ENCODE measurements at regions of chr19 and their contacts with region 1.

Region 1: GRCh38 chr19:35066691-35067563 is 25.4 kb downstream of the HPN start:
- DNase-seq: peak; percentile 99
- ATAC-seq: peak; percentile 80
- H3K4me3 Mint-ChIP-seq: peak overlapping the region; percentile 29
- H3K27ac Mint-ChIP-seq: peak overlapping the region; percentile 100
- H3K4me1 Mint-ChIP-seq: peaks cover 26% of the 10 kb centered on the region
- H3K27me3 Mint-ChIP-seq: peaks cover 32% of the 10 kb centered on the region
- CTCF ChIP-seq: peak; percentile 92

Region 2: DNA sequence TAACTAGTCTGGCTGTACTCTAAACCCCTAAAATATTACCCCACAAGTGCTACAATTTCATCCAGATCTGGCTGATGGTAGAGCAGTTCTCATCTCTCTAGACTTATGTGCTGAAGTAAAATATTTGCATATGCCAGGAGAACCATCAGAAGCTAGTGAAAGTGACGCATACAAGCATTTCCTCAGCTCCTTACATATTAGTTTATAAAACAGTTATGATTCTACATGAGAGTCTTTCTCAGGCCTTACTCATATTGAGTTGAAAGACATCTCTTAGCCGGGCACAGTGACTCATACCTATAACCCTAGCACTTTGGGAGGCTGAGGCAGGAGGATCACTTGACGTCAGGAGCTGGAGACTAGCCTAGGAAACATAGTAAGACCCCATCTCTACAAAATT is 156.2 kb before region 1 on chr19:
- CTCF ChIA-PET with region 1: no interaction called
- POLR2A ChIA-PET with region 1: no interaction called
- DNase-seq: no peak
- ATAC-seq: no peak
- H3K4me3 Mint-ChIP-seq: no peak overlapping the region
- H3K27ac Mint-ChIP-seq: no peak overlapping the region
- H3K4me1 Mint-ChIP-seq: peaks cover 6% of the 10 kb centered on the region
- H3K27me3 Mint-ChIP-seq: peaks cover 41% of the 10 kb centered on the region
- CTCF ChIP-seq: no peak

Region 3: GRCh38 chr19:35030257-35031071 is 36.5 kb before region 1 on chr19 and contains the start of gene SCN1B:
- CTCF ChIA-PET with region 1: no interaction called
- POLR2A ChIA-PET with region 1: no interaction called
- DNase-seq: peak; percentile 70
- ATAC-seq: peak; percentile 60
- H3K4me3 Mint-ChIP-seq: peak within 1 kb of the TSS; percentile 79
- H3K27ac Mint-ChIP-seq: no peak within 1 kb of the TSS
- H3K4me1 Mint-ChIP-seq: peaks cover 8% of the 10 kb centered on the region
- H3K27me3 Mint-ChIP-seq: peaks cover 48% of the 10 kb centered on the region
- CTCF ChIP-seq: no peak
- total RNA-seq, gene SCN1B: 4.4 to 8.0 TPM (median 4.8 TPM) in 3 replicates

Region 4: GRCh38 chr19:35044317-35045117 is 22.4 kb before region 1 on chr19:
- CTCF ChIA-PET with region 1: interaction called, 40 read pairs
- POLR2A ChIA-PET with region 1: no interaction called
- DNase-seq: peak; percentile 83
- ATAC-seq: no peak
- H3K4me3 Mint-ChIP-seq: no peak overlapping the region; the same call in 1 of the 2 replicates
- H3K27ac Mint-ChIP-seq: peak overlapping the region; percentile 15; the same call in 1 of the 2 replicates
- H3K4me1 Mint-ChIP-seq: peaks cover 50% of the 10 kb centered on the region
- H3K27me3 Mint-ChIP-seq: no peaks in the 10 kb centered on the region
- CTCF ChIP-seq: peak; percentile 99

Region 5: GRCh38 chr19:35090506-35091237 is 23.7 kb after region 1 on chr19:
- CTCF ChIA-PET with region 1: interaction called, 58 read pairs
- POLR2A ChIA-PET with region 1: interaction called, 5 read pairs
- DNase-seq: peak; percentile 72
- ATAC-seq: peak; percentile 87
- H3K4me3 Mint-ChIP-seq: peak overlapping the region; percentile 55
- H3K27ac Mint-ChIP-seq: no peak overlapping the region
- H3K4me1 Mint-ChIP-seq: peaks cover 15% of the 10 kb centered on the region
- H3K27me3 Mint-ChIP-seq: peaks cover 5% of the 10 kb centered on the region
- CTCF ChIP-seq: peak; percentile 74

Region 6: DNA sequence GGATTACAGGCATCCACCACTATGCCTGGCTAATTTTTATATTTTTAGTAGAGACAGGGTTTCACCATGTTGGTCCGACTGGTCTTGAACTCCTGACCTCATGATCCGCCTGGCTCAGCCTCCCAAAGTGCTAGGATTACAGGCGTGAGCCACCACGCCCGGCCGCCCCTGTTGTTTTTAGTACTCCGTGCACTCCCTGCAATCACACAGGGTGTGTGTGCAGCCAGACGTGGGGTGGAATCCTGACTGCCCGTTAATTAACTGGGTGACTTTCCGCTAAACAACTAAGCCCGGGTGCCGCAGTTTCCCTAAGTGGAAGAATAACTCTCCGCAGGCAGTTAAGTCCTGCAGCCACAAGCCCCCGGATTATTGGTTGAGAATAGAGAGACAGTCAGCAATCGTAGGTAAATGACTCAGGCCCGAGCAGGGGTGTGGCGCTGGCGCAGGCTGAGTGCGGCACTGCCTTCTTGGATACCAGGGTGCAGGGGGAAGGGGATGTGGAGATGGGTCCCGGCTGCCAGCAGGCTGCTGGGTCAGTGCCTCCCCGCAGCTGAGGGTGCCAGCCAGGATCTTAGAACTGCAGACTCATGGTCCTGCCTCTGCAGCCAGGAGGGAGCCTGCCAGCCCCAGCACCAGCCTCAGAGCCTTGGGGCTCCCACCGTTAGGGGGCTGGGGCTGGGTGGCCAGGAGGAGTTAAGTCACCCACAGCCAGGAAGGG is 42.6 kb after region 1 on chr19:
- CTCF ChIA-PET with region 1: interaction called, 44 read pairs
- POLR2A ChIA-PET with region 1: no interaction called
- DNase-seq: no peak
- ATAC-seq: no peak
- H3K4me3 Mint-ChIP-seq: no peak overlapping the region
- H3K27ac Mint-ChIP-seq: no peak overlapping the region
- H3K4me1 Mint-ChIP-seq: peaks cover 25% of the 10 kb centered on the region
- H3K27me3 Mint-ChIP-seq: no peaks in the 10 kb centered on the region
- CTCF ChIP-seq: no peak

Region 7: DNA sequence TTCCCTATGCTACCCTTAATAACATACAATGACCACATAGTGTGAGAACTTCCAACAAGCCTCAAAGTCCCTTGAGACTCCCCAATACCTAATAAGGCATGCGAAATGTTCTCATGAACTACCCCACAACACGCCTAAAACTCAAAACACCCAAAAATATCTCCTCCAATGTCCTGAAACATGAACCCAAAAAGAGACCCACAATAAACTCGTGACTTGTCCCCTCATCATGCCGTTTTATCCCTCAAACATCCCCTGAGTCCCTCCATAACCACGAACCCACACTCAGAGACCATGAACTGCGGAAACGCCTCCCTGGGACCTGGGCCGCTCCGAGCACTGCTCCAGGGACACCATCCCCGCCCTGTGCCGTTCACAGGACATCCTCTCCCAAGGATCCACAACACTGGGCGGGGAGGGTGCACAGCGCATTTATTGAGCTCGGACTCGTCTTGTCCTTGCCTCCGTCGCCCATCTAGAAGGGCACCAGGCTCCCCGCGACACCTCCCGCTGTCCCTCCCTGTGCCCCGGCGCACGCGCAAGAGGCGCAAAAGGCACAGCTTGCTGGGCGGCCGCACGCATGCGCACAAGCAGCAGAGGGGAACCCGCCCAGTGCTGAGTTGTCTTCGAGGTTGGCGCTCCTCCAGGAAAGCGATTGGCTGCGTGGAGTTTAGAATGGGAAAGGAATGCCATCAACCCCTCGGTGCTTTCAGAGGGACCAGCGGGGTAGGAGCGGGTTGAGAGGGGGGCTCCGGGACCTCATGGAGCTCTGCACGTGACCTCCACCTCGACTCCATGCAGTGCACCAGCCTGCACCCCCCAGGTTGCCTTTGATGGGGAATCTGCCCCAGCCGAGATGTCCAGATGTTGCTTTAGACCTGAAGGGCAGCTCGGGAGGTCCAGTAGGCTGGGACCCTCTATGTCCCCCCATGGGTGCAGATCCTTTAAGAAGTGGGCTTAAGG is 57.5 kb after region 1 on chr19:
- CTCF ChIA-PET with region 1: interaction called, 10 read pairs
- POLR2A ChIA-PET with region 1: no interaction called
- DNase-seq: peak; percentile 75
- ATAC-seq: peak; percentile 63
- H3K4me3 Mint-ChIP-seq: peak overlapping the region; percentile 40
- H3K27ac Mint-ChIP-seq: peak overlapping the region; percentile 41; the same call in 1 of the 2 replicates
- H3K4me1 Mint-ChIP-seq: peaks cover 31% of the 10 kb centered on the region
- H3K27me3 Mint-ChIP-seq: peaks cover 4% of the 10 kb centered on the region
- CTCF ChIP-seq: no peak

Region 8: GRCh38 chr19:35154525-35155406 is 87.8 kb after region 1 on chr19 and contains the start of gene FXYD5:
- CTCF ChIA-PET with region 1: interaction called, 24 read pairs
- POLR2A ChIA-PET with region 1: interaction called, 8 read pairs
- DNase-seq: peak; percentile 64
- ATAC-seq: peak; percentile 45
- H3K4me3 Mint-ChIP-seq: peak within 1 kb of the TSS; percentile 97
- H3K27ac Mint-ChIP-seq: peak within 1 kb of the TSS; percentile 58
- H3K4me1 Mint-ChIP-seq: peaks cover 53% of the 10 kb centered on the region
- H3K27me3 Mint-ChIP-seq: no peaks in the 10 kb centered on the region; the same call in 1 of the 2 replicates
- CTCF ChIP-seq: no peak
- total RNA-seq, gene FXYD5: 114 to 135 TPM (median 128 TPM) in 3 replicates